Activated CD4-positive, alpha-beta T cell treated with anti-CD3 and anti-CD28 coated beads for 36 hours (primary cell): ENCODE measurements at regions of chr4 and their contacts with region 1.

Region 1: DNA sequence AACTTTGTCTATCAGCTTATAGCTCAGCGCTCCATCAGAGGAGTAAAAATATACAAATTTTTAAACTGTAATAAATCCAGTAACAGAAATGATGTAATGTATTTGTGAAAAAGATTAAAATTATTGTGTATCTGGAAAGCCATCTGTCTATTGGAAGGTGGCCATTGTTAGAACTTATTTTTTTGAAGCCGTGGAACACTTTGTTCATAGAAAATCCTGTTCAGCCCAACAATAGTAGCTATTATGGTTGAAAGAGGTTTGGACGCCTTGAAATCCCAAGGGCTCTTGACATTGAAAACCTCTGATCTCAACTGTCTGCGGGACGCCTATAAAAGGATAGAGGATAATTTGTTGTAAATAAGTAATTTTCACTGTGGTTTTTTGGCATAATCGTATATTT is 98.3 kb downstream of the RAPGEF2 start:
- DNase-seq: no peak
- ATAC-seq: no peak
- H3K4me3 Mint-ChIP-seq: no peak overlapping the region
- H3K27ac Mint-ChIP-seq: no peak overlapping the region
- H3K4me1 Mint-ChIP-seq: peaks cover 27% of the 10 kb centered on the region
- H3K27me3 Mint-ChIP-seq: no peaks in the 10 kb centered on the region

Region 2: DNA sequence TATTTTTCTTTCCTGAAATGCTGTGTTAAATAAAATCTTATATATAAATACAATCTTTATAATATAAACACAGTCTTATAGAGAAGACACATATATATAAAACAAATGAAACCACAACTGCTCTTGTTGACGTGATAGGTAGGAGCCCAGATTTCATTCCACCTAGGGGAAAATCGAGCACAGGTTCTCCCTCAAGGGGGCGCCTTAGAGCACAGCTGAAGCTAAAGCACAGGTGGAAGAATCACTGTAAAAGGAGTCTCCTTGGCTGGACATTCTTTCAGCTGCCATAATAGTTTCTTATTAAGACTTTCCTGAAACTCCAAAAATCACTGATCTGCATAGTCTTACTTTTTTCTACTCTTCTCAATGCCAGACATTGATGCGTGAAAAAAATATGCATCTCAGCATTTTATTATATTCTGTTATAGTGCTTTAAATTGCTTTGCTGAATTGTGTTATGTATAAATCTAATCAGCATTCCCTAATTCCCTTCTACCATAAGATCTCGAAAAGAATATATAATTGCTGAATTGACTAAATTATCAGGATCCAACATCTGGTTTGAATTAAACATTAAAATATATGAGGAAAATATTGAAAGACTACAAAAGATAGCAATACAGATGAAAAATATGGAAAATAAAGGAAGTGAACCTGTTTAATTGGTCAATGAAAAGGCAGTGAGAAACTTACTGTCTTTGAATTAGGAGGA is 705.0 kb before region 1 on chr4:
- CTCF ChIA-PET with region 1: no interaction called
- POLR2A ChIA-PET with region 1: no interaction called
- intact Hi-C with region 1: no loop called
- DNase-seq: peak; percentile 66
- ATAC-seq: no peak
- H3K4me3 Mint-ChIP-seq: no peak overlapping the region
- H3K27ac Mint-ChIP-seq: no peak overlapping the region
- H3K4me1 Mint-ChIP-seq: no peaks in the 10 kb centered on the region
- H3K27me3 Mint-ChIP-seq: peaks cover 9% of the 10 kb centered on the region

Region 3: GRCh38 chr4:158856852-158857251 is 344.3 kb before region 1 on chr4:
- CTCF ChIA-PET with region 1: interaction called, 31 read pairs
- POLR2A ChIA-PET with region 1: no interaction called
- intact Hi-C with region 1: loop called (anchors 1 kb)
- DNase-seq: no peak
- ATAC-seq: peak; percentile 87
- H3K4me3 Mint-ChIP-seq: no peak overlapping the region
- H3K27ac Mint-ChIP-seq: no peak overlapping the region
- H3K4me1 Mint-ChIP-seq: peaks cover 2% of the 10 kb centered on the region
- H3K27me3 Mint-ChIP-seq: no peaks in the 10 kb centered on the region

Region 4: DNA sequence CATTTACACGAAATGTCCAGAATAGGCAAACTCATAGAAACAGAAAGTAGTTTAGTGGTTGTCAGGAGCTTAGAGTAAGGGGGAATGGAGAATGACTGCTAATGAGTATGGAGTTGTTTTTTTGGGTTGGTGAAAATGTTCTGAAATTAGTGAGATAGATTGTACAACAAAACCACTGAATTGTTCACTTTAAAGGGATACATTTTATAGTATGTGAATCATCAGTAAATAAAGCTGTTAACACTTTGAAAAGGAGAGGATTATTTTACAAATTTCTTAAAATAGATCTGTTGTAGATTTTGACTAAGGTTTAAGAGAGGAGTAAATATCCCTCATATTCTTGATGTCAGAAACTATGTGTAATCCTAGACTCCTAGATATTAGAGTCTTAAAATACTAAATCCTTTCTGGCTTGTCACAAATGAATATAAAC is 15.6 kb before region 1 on chr4:
- CTCF ChIA-PET with region 1: interaction called, 15 read pairs
- POLR2A ChIA-PET with region 1: interaction called, 4 read pairs
- intact Hi-C with region 1: no loop called
- DNase-seq: no peak
- ATAC-seq: peak; percentile 76
- H3K4me3 Mint-ChIP-seq: no peak overlapping the region
- H3K27ac Mint-ChIP-seq: peak overlapping the region; percentile 30
- H3K4me1 Mint-ChIP-seq: peaks cover 10% of the 10 kb centered on the region
- H3K27me3 Mint-ChIP-seq: no peaks in the 10 kb centered on the region

Region 5: DNA sequence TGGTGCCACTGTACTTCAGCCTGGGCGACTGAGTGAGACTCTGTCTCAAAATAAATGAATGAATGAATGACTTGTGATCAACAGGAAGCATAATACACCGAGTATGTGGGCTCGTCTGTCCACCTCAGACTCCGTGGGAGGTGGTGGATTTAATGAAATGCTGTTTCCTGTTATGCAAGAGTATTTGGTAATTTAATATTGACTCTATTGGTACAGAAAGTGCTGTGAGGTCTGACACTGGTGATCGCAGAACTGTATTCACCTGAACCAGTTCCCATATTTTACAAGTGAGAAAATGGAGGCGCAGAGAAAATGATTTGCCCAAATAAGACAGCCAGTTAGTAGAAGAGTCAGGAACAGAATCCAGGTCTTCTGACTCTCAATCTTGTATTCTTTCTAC is 325.0 kb after region 1 on chr4:
- CTCF ChIA-PET with region 1: no interaction called
- POLR2A ChIA-PET with region 1: no interaction called
- intact Hi-C with region 1: no loop called
- DNase-seq: no peak
- ATAC-seq: no peak
- H3K4me3 Mint-ChIP-seq: no peak overlapping the region
- H3K27ac Mint-ChIP-seq: no peak overlapping the region
- H3K4me1 Mint-ChIP-seq: no peaks in the 10 kb centered on the region
- H3K27me3 Mint-ChIP-seq: no peaks in the 10 kb centered on the region